GM10248 (cell line): ENCODE measurements at regions of chr12 and their contacts with region 1.

Region 1: DNA sequence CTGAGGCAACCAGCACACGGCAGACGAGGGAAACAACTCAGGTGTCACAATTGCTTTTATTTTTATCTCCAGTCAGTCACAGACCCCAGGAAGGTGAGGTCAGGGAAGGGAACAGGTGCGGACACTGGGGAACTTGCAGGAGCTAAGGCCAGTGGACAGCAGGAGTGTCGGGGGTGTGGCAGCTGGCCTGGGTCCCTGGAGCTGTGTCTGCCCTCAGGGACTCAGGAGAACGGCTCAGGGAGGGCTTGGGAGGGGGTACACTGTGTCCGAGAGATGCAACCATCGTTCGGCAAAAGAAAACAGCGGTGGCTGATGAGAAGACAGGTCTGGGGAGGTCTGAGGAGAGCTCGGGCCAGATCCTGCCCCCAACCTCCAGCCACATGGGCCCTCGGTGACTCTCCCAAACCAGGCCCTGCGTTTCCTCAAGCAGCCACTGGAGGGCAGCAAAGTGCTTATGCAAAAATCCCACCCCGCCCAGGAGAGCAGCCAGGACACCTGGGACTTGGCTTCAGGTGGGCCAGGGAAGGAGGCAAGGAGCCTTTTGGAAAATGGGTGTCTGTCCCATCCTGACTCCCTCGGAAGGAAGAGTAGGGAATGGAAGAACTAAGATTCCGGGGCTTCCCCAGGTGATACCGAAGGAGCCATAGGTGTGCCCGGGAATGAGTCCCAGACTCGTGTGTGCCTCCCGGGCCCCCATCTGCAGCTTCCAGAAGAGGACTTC is 24.1 kb upstream of the BCDIN3D start:
- DNase-seq: peak; percentile 93
- CTCF ChIP-seq: peak; percentile 94

Region 2: DNA sequence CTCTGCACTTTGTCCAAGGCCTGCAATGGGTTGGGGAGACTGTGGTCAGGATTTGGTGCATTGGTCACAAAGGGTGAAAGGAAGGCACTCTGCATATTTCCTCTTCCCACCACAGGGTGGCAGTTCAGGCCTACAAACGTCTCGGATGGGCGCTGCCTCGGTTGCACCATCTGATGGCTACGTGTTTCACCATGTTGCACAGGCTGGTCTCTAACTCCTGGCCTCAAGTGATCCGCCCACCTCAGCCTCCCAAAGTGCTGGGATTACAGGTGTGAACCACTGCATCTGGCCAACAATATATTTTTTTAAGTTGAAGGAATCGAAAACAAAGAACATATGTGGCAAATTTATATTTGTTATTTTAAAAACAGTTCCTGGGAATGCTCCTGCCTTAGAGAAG is 90.6 kb before region 1 on chr12:
- CTCF ChIA-PET with region 1: interaction called, 24 read pairs
- POLR2A ChIA-PET with region 1: no interaction called
- DNase-seq: peak; percentile 78
- CTCF ChIP-seq: peak; percentile 79

Region 3: GRCh38 chr12:49828133-49829091 is 38.6 kb before region 1 on chr12 and contains the start of gene NCKAP5L:
- CTCF ChIA-PET with region 1: interaction called, 4 read pairs
- POLR2A ChIA-PET with region 1: interaction called, 12 read pairs
- DNase-seq: peak; percentile 99
- CTCF ChIP-seq: no peak

Region 4: DNA sequence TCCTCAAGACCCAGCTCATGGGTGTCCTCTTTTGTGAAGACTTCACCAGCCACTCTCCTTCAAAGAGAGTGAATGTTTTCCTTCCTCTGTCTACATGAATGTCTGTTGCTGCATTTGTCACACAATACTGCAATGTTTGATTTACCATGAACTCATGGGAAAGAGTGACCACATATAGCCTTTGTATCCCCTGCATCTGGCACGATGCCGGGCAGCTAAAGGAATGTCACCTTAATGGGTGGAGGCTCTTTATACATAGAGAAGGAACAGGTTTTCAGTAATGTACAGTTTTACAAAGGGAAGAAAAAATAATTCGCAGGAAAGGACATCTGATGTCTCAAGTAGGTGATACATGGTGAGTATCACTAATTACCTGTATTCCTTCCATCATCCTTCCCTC is 12.0 kb before region 1 on chr12:
- CTCF ChIA-PET with region 1: interaction called, 30 read pairs
- POLR2A ChIA-PET with region 1: no interaction called
- DNase-seq: no peak
- CTCF ChIP-seq: no peak

Region 5: DNA sequence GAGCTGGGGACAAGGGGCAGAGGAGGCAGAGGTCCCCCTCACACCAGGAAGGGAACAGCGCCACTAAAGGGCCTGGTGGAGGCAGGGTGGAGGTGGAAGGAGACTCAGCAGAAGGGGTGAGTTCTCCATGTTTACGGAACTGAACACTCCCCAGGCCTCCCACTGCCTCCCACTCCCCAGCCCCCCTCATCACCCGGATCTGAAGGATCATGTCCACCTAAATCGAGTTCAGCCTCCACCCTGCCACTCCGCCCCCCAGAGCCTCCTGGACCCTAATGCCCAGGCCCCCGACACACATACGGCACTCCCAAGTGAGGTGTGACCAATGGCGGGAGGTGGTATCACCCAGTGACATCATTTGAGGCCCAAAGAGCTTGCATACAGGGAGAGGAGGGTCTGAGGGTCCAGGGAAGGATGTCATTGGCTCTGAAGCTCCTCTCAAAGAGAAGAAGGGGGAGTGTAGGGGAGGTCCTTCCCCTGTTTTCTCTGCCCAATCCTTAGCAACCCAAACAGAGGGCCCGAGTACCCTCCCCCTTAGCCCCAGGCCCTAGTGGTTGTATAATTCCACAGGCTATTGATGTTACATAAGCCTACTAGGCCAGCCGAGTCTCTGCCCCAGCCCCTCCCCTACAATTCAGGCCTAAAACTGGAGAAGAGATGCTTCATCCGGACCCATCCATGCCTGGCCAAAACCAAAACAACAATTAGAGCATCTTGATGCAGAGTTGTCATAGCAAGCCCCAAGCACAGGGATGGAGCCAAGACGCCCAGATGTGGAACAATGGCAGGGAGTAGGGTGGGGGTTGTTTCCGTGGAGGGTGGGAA is 35.7 kb after region 1 on chr12:
- CTCF ChIA-PET with region 1: interaction called, 10 read pairs
- POLR2A ChIA-PET with region 1: no interaction called
- DNase-seq: no peak
- CTCF ChIP-seq: no peak

Region 6: DNA sequence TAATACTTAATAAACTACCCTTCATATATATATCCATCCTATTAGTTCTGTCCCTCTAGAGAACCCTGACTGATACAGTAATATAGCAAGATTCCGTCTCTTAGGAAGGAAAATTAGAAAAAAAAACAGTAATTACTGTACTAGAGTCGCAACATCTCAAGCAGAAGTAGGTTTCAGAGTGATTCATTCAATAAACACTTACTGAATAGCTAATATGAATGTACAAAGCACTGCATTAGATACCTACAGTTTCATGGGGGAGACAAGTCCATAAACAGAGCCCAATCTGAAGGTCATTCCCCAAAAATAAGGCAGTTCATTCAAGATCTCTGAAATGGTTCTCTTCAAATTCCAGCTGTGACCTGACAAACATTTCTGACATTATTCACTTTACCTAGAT is 290.2 kb after region 1 on chr12:
- CTCF ChIA-PET with region 1: no interaction called
- POLR2A ChIA-PET with region 1: no interaction called
- DNase-seq: no peak
- CTCF ChIP-seq: no peak